ENCODE measurements at regions of chr20 and their contacts with region 1.

Region 1: GRCh38 chr20:44388466-44389023 is 33.0 kb downstream of the HNF4A start:
- DNase-seq: peak; percentile 90
- H3K27ac ChIP-seq: no peak overlapping the region
- CTCF ChIP-seq: peak; percentile 94

Region 2: GRCh38 chr20:44217342-44218092 is 171.0 kb before region 1 on chr20:
- CTCF ChIA-PET with region 1: interaction called, 90 read pairs
- POLR2A ChIA-PET with region 1: no interaction called
- DNase-seq: peak; percentile 82
- H3K27ac ChIP-seq: no peak overlapping the region
- CTCF ChIP-seq: peak; percentile 98

Region 3: GRCh38 chr20:44310664-44311639 is 77.6 kb before region 1 on chr20 and contains the start of gene FITM2:
- CTCF ChIA-PET with region 1: interaction called, 13 read pairs
- POLR2A ChIA-PET with region 1: no interaction called
- DNase-seq: peak; percentile 100
- H3K27ac ChIP-seq: peak within 1 kb of the TSS; percentile 67
- CTCF ChIP-seq: peak; percentile 100

Region 4: DNA sequence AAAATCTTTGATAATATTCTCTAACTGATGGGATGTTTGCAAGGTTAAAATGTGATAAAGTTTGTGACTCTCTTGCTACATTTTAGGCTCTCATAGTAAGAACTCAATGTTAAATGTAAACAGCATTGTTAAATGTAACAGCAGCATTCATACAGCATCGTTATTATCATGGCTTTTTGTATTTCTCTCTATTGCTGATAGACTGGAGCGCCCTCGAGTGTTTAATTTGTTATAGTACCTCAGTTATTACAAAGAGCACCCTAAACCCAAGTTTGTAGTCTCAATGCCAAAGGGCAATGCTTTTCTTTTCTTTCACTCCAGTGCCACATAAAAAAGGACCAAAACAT is 72.2 kb after region 1 on chr20:
- CTCF ChIA-PET with region 1: interaction called, 31 read pairs
- POLR2A ChIA-PET with region 1: interaction called, 3 read pairs
- DNase-seq: peak; percentile 83
- H3K27ac ChIP-seq: no peak overlapping the region
- CTCF ChIP-seq: peak; percentile 73

Region 5: DNA sequence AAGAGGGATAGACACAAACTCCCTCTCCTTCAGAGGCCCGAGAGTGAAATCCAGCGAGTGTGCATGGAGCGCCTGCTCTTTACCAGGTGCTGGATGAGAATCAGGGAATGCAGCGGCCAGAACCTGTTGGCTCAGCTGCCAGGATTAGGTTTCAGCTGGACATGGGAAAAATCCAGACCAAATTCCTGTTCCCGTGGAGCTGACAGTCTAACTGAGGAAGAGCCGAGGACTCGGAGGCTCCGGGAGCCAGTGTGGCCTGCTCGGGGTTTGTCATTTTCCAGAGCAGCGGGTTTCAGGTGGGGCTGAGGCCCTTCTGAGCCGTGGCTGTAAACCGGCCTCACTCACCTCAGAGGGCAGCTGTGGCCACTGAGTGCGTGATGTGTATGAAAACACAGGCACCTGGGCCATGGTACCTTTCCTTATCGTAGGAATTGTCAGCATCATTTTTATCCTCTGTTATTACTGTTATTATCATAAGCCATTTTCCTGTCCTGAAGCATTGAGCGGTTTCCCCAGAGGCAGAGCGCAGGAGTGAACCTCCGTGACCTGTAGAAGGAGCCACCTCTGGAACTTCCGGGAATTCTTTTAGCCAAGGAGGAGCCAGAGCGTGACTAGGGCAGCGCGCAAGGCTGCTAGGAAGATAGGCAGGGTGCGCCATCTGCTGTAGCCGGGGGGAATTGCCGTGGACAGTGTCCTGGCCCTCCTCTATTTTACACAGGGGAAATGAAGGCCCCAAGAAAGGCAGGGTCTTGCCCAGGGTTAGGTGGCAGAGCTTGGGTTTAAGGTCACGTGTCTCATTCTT is 221.2 kb after region 1 on chr20:
- CTCF ChIA-PET with region 1: interaction called, 15 read pairs
- POLR2A ChIA-PET with region 1: no interaction called
- DNase-seq: peak; percentile 97
- H3K27ac ChIP-seq: peak overlapping the region; percentile 64
- CTCF ChIP-seq: peak; percentile 100

Measured in RWPE1 (cell line).